CD8-positive, alpha-beta T cell (primary cell): ENCODE measurements at regions of chr3 and their contacts with region 1.

Region 1: GRCh38 chr3:28247286-28247685 is 5.9 kb downstream of the CMC1 start:
- DNase-seq: peak in 1 of 9 experiments; percentile 23
- ATAC-seq: no peak
- H3K4me3 ChIP-seq: no peak overlapping the region
- H3K4me3 Mint-ChIP-seq: peak overlapping the region; percentile 30
- H3K27ac ChIP-seq: no peak overlapping the region
- H3K27ac Mint-ChIP-seq: peak overlapping the region; percentile 42
- H3K4me1 ChIP-seq: peaks cover 39% of the 10 kb centered on the region
- H3K4me1 Mint-ChIP-seq: peaks cover 86% of the 10 kb centered on the region
- H3K27me3 ChIP-seq: no peaks in the 10 kb centered on the region
- H3K27me3 Mint-ChIP-seq: no peaks in the 10 kb centered on the region
- CTCF ChIP-seq: no peak

Region 2: GRCh38 chr3:28262001-28262400 is 14.7 kb after region 1 on chr3:
- CTCF ChIA-PET with region 1: no interaction called
- POLR2A ChIA-PET with region 1: interaction called, 3 read pairs
- intact Hi-C with region 1: loop called in 1 of 2 experiments (anchors 2 kb)
- DNase-seq: no peak
- ATAC-seq: no peak
- H3K4me3 ChIP-seq: no peak overlapping the region
- H3K4me3 Mint-ChIP-seq: no peak overlapping the region
- H3K27ac ChIP-seq: no peak overlapping the region
- H3K27ac Mint-ChIP-seq: no peak overlapping the region
- H3K4me1 ChIP-seq: no peaks in the 10 kb centered on the region
- H3K4me1 Mint-ChIP-seq: peaks cover 26% of the 10 kb centered on the region
- H3K27me3 ChIP-seq: no peaks in the 10 kb centered on the region
- H3K27me3 Mint-ChIP-seq: no peaks in the 10 kb centered on the region
- CTCF ChIP-seq: no peak

Region 3: DNA sequence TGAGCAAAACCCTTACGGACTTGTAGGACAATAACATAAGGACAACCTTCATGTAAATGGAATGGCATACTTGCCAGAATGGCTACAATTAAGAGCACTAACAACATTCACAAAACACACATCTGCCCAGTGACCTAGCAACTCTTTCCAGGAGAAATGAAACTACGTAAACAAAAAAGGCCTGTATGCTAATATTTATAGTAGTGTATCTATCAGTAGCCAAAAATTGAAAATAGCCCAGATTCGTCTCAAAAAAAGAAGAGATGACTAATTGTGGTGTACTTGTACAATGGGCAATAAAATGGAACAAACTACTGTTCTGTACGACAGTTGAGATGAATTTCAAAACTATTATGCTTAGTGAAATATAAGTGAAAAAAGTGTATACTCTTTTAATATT is 32.5 kb after region 1 on chr3:
- CTCF ChIA-PET with region 1: no interaction called
- POLR2A ChIA-PET with region 1: no interaction called
- intact Hi-C with region 1: no loop called
- DNase-seq: no peak
- ATAC-seq: no peak
- H3K4me3 ChIP-seq: no peak overlapping the region
- H3K4me3 Mint-ChIP-seq: no peak overlapping the region
- H3K27ac ChIP-seq: no peak overlapping the region
- H3K27ac Mint-ChIP-seq: no peak overlapping the region
- H3K4me1 ChIP-seq: no peaks in the 10 kb centered on the region
- H3K4me1 Mint-ChIP-seq: peaks cover 23% of the 10 kb centered on the region
- H3K27me3 ChIP-seq: no peaks in the 10 kb centered on the region
- H3K27me3 Mint-ChIP-seq: no peaks in the 10 kb centered on the region
- CTCF ChIP-seq: no peak